Activated CD4-positive, alpha-beta memory T cell treated with anti-CD3 and anti-CD28 coated beads for 36 hours (primary cell): ENCODE measurements at regions of chr5 and their contacts with region 1.

Region 1: GRCh38 chr5:150357326-150358260 is at the start of gene TCOF1:
- DNase-seq: peak; percentile 98
- H3K4me3 Mint-ChIP-seq: peak within 1 kb of the TSS; percentile 89
- H3K27ac Mint-ChIP-seq: peak within 1 kb of the TSS; percentile 81
- H3K4me1 Mint-ChIP-seq: peaks cover 35% of the 10 kb centered on the region
- H3K27me3 Mint-ChIP-seq: no peaks in the 10 kb centered on the region
- total RNA-seq, gene TCOF1: 91.3 to 95.0 TPM

Region 2: DNA sequence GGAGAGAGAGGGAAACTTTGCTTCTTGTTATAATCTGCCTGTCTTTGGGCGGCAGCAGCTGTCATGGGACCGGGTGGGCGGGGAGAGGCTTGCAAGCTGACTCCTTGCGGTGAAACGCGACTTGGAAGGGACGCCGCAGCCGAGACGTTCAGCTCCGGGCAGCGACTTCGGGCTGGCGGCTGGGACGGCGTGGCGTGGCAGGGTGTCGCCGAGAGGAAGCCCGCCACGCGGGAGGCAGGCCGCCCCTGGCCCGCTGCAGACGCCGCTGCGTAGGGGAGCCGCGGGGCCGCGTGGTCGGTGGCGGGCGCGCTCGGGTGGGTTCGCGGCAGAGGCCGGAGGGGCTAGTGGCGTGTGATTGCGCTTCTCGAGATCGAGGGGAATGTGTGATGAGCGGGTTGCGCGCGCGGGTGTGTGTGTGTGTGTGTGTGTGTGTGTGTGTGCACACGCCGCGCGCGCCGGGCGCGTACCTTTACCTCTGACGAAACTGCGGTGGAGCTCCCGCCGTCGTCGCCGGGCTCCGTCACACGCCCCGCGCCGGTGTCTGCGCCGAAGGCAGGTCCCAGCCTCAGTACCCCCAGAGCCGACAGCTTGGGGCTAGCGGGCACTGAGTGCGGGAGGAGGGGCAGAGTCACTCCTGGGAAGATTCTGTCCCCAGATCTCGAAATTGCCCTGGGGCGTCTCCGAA is 625.8 kb before region 1 on chr5:
- CTCF ChIA-PET with region 1: no interaction called
- POLR2A ChIA-PET with region 1: no interaction called
- intact Hi-C with region 1: loop called (anchors 5 kb)
- DNase-seq: peak; percentile 89
- H3K4me3 Mint-ChIP-seq: peak overlapping the region; percentile 77
- H3K27ac Mint-ChIP-seq: no peak overlapping the region
- H3K4me1 Mint-ChIP-seq: peaks cover 3% of the 10 kb centered on the region
- H3K27me3 Mint-ChIP-seq: no peaks in the 10 kb centered on the region

Region 3: GRCh38 chr5:150449517-150450339 is 92.1 kb after region 1 on chr5 and contains the start of gene RPS14:
- CTCF ChIA-PET with region 1: interaction called, 4 read pairs
- POLR2A ChIA-PET with region 1: no interaction called
- intact Hi-C with region 1: loop called (anchors 1 kb)
- DNase-seq: peak; percentile 96
- H3K4me3 Mint-ChIP-seq: peak within 1 kb of the TSS; percentile 91
- H3K27ac Mint-ChIP-seq: peak within 1 kb of the TSS; percentile 99
- H3K4me1 Mint-ChIP-seq: peaks cover 32% of the 10 kb centered on the region
- H3K27me3 Mint-ChIP-seq: no peaks in the 10 kb centered on the region
- total RNA-seq, gene RPS14: 3,748 to 3,882 TPM